ENCODE measurements at regions of chr6 and their contacts with region 1.

Region 1: GRCh38 chr6:73461537-73462350 is at the start of gene MTO1:
- DNase-seq: peak; percentile 65 to 93 (median 85)
- ATAC-seq: peak; percentile 95 to 97 (median 96)
- H3K4me3 ChIP-seq: peak within 1 kb of the TSS; percentile 78 to 84
- H3K4me3 Mint-ChIP-seq: peak within 1 kb of the TSS; percentile 88 to 96 (median 93)
- H3K27ac ChIP-seq: peak within 1 kb of the TSS; percentile 93
- H3K27ac Mint-ChIP-seq: peak within 1 kb of the TSS; percentile 94 to 97
- H3K4me1 ChIP-seq: peaks cover 2 to 36% of the 10 kb centered on the region in 2 experiments
- H3K4me1 Mint-ChIP-seq: peaks cover 42 to 54% (median 43%) of the 10 kb centered on the region in 3 donors
- H3K27me3 ChIP-seq: no peaks in the 10 kb centered on the region
- H3K27me3 Mint-ChIP-seq: no peaks in the 10 kb centered on the region
- total RNA-seq, gene MTO1: 55.0 to 80.4 (median 59.3) TPM

Region 2: GRCh38 chr6:73236147-73236750 is 225.5 kb before region 1 on chr6:
- CTCF ChIA-PET with region 1: no interaction called
- POLR2A ChIA-PET with region 1: no interaction called
- DNase-seq: no peak
- ATAC-seq: no peak
- H3K4me3 ChIP-seq: no peak overlapping the region
- H3K4me3 Mint-ChIP-seq: no peak overlapping the region
- H3K27ac ChIP-seq: no peak overlapping the region
- H3K27ac Mint-ChIP-seq: no peak overlapping the region
- H3K4me1 ChIP-seq: no peaks in the 10 kb centered on the region
- H3K4me1 Mint-ChIP-seq: no peaks in the 10 kb centered on the region
- H3K27me3 ChIP-seq: peaks cover 0 to 5% of the 10 kb centered on the region in 2 experiments
- H3K27me3 Mint-ChIP-seq: no peaks in the 10 kb centered on the region

Region 3: DNA sequence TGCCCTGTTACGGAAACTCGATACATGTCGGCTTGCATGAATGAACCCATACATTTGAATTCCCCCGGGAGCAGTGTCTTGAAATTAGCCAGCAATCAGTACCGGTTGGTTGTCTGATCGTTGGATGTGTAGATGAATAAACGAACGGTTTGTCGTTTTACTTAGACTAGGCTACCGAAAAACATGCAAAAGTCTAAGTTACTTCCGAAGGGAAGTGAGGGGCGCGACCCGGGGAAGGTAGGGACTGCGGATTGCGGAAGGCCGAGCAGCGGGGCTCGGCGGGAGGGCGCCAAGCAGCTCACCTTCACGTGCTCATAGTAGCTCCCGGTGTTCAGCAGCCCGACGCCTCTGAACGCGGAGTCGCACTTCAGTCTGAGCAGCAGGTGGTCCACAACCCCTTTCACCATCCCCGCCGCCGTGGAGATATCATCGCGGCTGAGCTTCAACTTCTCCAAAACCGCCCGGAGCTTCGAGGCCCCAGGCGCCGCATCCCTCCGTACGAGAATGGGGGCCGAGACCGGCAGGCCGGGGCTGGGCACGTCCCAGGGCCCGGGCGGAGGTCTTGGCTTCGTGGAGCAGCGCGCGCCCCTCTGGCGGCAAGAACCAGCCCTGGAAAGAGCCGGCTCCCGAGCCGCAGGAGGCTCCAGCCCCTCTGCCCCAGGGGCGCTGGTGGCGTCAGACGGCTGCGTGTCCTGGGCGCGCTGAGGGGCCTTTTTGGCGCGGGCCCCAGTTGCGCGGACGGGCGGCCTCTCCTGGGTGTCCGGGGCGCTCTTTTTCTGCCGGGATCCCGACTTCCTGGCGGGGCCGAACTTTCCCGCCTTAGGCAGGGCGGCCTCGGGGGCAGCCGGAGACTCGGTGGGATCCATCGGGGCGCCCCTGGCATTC is 10.3 kb before region 1 on chr6:
- CTCF ChIA-PET with region 1: interaction called in 1 of 2 experiments, 13 read pairs
- POLR2A ChIA-PET with region 1: interaction called, 4 to 25 read pairs
- DNase-seq: peak in 31 of 35 experiments; percentile 6 to 63 (median 27)
- ATAC-seq: peak; percentile 59 to 73 (median 64)
- H3K4me3 ChIP-seq: peak overlapping the region; percentile 62 to 83
- H3K4me3 Mint-ChIP-seq: peak overlapping the region; percentile 85 to 94 (median 93)
- H3K27ac ChIP-seq: peak overlapping the region; percentile 60
- H3K27ac Mint-ChIP-seq: peak overlapping the region; percentile 87 to 88
- H3K4me1 ChIP-seq: peaks cover 6 to 43% of the 10 kb centered on the region in 2 experiments
- H3K4me1 Mint-ChIP-seq: peaks cover 27 to 37% (median 30%) of the 10 kb centered on the region in 3 donors
- H3K27me3 ChIP-seq: no peaks in the 10 kb centered on the region
- H3K27me3 Mint-ChIP-seq: no peaks in the 10 kb centered on the region

Region 4: GRCh38 chr6:73476723-73477122 is 15.0 kb after region 1 on chr6:
- CTCF ChIA-PET with region 1: interaction called in 1 of 2 experiments, 6 read pairs
- POLR2A ChIA-PET with region 1: interaction called, 3 to 18 read pairs
- DNase-seq: no peak
- ATAC-seq: no peak
- H3K4me3 ChIP-seq: no peak overlapping the region
- H3K4me3 Mint-ChIP-seq: no peak overlapping the region
- H3K27ac ChIP-seq: no peak overlapping the region
- H3K27ac Mint-ChIP-seq: no peak overlapping the region
- H3K4me1 ChIP-seq: no peaks in the 10 kb centered on the region
- H3K4me1 Mint-ChIP-seq: peaks cover 4 to 6% (median 5%) of the 10 kb centered on the region in 3 donors
- H3K27me3 ChIP-seq: no peaks in the 10 kb centered on the region
- H3K27me3 Mint-ChIP-seq: no peaks in the 10 kb centered on the region

Region 5: DNA sequence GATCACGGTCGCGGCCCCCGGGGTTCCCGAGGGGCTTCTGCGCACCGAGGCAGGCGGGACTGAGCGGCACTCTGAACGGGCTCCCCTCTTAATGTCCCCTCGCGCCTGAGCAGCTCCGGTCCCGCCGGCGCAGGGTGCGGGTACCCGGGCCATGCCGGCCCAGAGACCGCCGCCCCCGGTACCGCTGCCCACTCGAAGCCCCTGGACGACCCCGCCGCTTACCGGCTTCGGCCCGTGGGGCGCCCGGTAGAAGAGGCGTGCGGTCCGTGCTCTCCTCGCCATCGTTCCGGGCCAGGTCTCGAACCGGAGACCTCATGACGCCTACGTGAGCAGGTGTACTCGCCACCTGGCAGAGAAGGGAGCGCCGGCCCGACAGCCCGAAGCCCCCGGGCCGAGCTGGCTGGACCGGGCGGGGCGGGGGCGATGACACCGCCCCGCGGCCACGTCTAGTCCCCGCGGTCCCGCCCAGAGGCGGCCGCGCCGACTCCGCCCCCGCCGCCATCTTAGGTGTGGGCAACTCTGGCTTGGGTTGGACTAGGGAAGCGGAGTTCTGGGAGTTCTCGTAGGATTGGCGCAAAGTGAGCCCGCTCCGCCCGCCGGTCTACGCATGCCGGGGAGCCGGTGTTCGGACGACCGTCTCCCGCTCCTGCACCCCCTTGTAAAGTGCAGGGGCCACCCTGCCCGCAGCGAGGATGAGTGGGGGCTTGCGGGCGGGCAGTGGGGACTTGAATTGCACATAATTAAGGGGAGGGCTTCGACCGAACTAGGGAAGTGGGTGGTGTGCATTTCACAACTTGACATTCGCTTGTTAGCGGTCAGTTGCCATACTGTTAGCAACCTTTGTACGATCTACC is 192.1 kb after region 1 on chr6 and contains the start of gene SLC17A5:
- CTCF ChIA-PET with region 1: interaction called in 1 of 2 experiments, 17 read pairs
- POLR2A ChIA-PET with region 1: interaction called, 4 to 6 read pairs
- DNase-seq: peak; percentile 78 to 93 (median 86)
- ATAC-seq: peak; percentile 91 to 95 (median 92)
- H3K4me3 ChIP-seq: peak within 1 kb of the TSS; percentile 80 to 98
- H3K4me3 Mint-ChIP-seq: peak within 1 kb of the TSS; percentile 94 to 97 (median 96)
- H3K27ac ChIP-seq: peak within 1 kb of the TSS; percentile 98
- H3K27ac Mint-ChIP-seq: peak within 1 kb of the TSS; percentile 95 to 97
- H3K4me1 ChIP-seq: peaks cover 6 to 17% of the 10 kb centered on the region in 2 experiments
- H3K4me1 Mint-ChIP-seq: peaks cover 34 to 37% (median 34%) of the 10 kb centered on the region in 3 donors
- H3K27me3 ChIP-seq: no peaks in the 10 kb centered on the region
- H3K27me3 Mint-ChIP-seq: no peaks in the 10 kb centered on the region
- total RNA-seq, gene SLC17A5: 6.4 to 15.0 (median 9.4) TPM

Measured in T-cell (primary cell).